ENCODE measurements at regions of chr12 and their contacts with region 1.

Region 1: GRCh38 chr12:58881816-58882215 is 38.5 kb downstream of the LRIG3 start:
- DNase-seq: no peak
- ATAC-seq: no peak
- H3K4me3 ChIP-seq: no peak overlapping the region
- H3K27ac ChIP-seq: no peak overlapping the region
- H3K4me1 ChIP-seq: no peaks in the 10 kb centered on the region
- H3K27me3 ChIP-seq: no peaks in the 10 kb centered on the region
- CTCF ChIP-seq: no peak
- EP300 ChIP-seq: no peak
- POLR2A ChIP-seq: no peak
- RAD21 ChIP-seq: no peak

Region 2: GRCh38 chr12:58386136-58386535 is 495.7 kb before region 1 on chr12:
- CTCF ChIA-PET with region 1: no interaction called
- POLR2A ChIA-PET with region 1: interaction called, 10 read pairs
- RAD21 ChIA-PET with region 1: no interaction called
- SMC1A ChIA-PET with region 1: no interaction called
- in situ Hi-C with region 1: no loop called
- intact Hi-C with region 1: no loop called
- DNase-seq: no peak
- ATAC-seq: no peak
- H3K4me3 ChIP-seq: no peak overlapping the region
- H3K27ac ChIP-seq: no peak overlapping the region
- H3K4me1 ChIP-seq: no peaks in the 10 kb centered on the region
- H3K27me3 ChIP-seq: no peaks in the 10 kb centered on the region
- CTCF ChIP-seq: no peak
- EP300 ChIP-seq: no peak
- POLR2A ChIP-seq: no peak
- RAD21 ChIP-seq: no peak

Region 3: GRCh38 chr12:58741226-58741625 is 140.6 kb before region 1 on chr12:
- CTCF ChIA-PET with region 1: no interaction called
- POLR2A ChIA-PET with region 1: no interaction called
- RAD21 ChIA-PET with region 1: no interaction called
- SMC1A ChIA-PET with region 1: no interaction called
- in situ Hi-C with region 1: no loop called
- intact Hi-C with region 1: no loop called
- DNase-seq: no peak
- ATAC-seq: no peak
- H3K4me3 ChIP-seq: no peak overlapping the region
- H3K27ac ChIP-seq: no peak overlapping the region
- H3K4me1 ChIP-seq: no peaks in the 10 kb centered on the region
- H3K27me3 ChIP-seq: no peaks in the 10 kb centered on the region
- CTCF ChIP-seq: no peak; a peak in 1 of 6 replicates
- EP300 ChIP-seq: no peak
- POLR2A ChIP-seq: no peak
- RAD21 ChIP-seq: 0 out of 2 replicates have a peak, but pooled peaks have one; percentile 24

Region 4: GRCh38 chr12:58860788-58861240 is 21.0 kb before region 1 on chr12:
- CTCF ChIA-PET with region 1: no interaction called
- POLR2A ChIA-PET with region 1: interaction called, 11 read pairs
- RAD21 ChIA-PET with region 1: no interaction called
- SMC1A ChIA-PET with region 1: no interaction called
- in situ Hi-C with region 1: no loop called
- intact Hi-C with region 1: no loop called
- DNase-seq: no peak
- ATAC-seq: no peak
- H3K4me3 ChIP-seq: no peak overlapping the region
- H3K27ac ChIP-seq: no peak overlapping the region
- H3K4me1 ChIP-seq: no peaks in the 10 kb centered on the region
- H3K27me3 ChIP-seq: no peaks in the 10 kb centered on the region
- CTCF ChIP-seq: no peak
- EP300 ChIP-seq: no peak
- POLR2A ChIP-seq: no peak
- RAD21 ChIP-seq: no peak

Region 5: GRCh38 chr12:59219148-59219547 is 337.3 kb after region 1 on chr12:
- CTCF ChIA-PET with region 1: no interaction called
- POLR2A ChIA-PET with region 1: no interaction called
- RAD21 ChIA-PET with region 1: no interaction called
- SMC1A ChIA-PET with region 1: no interaction called
- in situ Hi-C with region 1: no loop called
- intact Hi-C with region 1: no loop called
- DNase-seq: no peak
- ATAC-seq: no peak
- H3K4me3 ChIP-seq: no peak overlapping the region
- H3K27ac ChIP-seq: no peak overlapping the region
- H3K4me1 ChIP-seq: no peaks in the 10 kb centered on the region
- H3K27me3 ChIP-seq: no peaks in the 10 kb centered on the region
- CTCF ChIP-seq: no peak
- EP300 ChIP-seq: no peak
- POLR2A ChIP-seq: no peak
- RAD21 ChIP-seq: no peak